Right ventricle myocardium superior (tissue), 1 donor: ENCODE measurements at regions of chr6 and their contacts with region 1.

Region 1: DNA sequence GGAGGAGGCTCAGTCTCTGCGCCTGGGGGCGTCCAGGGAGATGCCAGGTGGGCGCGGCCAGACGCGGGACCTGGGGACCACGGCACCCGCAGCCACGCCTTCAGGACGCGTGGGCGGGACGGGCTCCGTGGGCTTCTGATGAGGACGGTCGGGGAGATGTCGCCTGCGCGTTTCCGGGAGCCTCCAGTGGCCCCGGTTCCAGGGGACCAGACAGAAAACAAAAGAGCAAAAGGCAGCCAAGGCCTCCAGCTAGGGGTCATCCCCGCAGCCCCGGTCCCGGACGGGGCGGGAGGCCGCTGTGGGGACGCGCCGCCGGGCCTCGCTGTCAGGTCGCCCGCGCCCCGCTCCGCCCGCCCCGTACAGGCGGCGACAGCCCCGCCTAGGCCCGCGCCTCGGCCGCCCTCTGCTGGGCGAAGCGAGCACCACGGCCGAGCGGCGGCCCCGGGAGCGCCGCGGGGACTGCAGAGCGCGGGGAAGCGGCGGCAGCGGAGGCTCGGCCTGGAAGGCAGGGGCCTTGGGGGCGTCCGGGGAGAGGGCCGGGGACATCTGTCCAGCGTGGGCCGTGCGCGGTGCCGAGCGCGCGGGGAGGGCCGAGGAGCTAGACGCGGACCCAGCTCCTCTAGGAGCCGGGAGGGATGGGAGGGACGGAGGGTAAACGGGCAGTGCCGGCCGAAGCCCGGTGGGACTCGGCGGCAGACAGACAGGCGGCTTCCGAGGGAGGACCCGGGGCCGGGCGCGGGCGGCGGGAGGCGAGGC is 48.7 kb downstream of the TMEM242 start:
- DNase-seq: peak; percentile 85
- ATAC-seq: peak; percentile 99

Region 2: DNA sequence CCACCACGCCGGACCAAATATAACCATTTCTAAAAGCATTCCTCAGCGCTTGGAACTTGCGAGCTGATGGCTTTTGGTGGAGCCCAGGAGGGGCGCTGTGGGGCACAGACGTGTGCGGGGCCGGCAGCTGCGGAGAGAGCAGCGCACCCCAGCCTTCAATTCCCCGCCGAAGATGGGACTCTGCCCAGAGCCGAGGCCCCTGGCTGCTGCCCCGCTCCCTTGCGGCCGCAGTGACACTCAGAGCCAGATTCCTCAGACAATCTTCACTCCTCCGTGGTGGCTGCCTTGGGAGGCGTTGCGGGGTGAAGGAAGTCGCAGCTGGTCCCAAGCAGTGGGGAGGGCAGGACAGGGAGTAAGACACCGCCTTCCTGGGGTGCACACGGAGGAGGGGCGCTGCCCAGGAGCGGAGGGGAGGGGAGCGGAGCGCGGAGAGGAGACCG is 39.0 kb before region 1 on chr6:
- intact Hi-C with region 1: loop called (anchors 2 kb)
- DNase-seq: peak; percentile 68
- ATAC-seq: peak; percentile 90